Ovary (tissue), 10 donors: ENCODE measurements at regions of chr10 and their contacts with region 1.

Region 1: DNA sequence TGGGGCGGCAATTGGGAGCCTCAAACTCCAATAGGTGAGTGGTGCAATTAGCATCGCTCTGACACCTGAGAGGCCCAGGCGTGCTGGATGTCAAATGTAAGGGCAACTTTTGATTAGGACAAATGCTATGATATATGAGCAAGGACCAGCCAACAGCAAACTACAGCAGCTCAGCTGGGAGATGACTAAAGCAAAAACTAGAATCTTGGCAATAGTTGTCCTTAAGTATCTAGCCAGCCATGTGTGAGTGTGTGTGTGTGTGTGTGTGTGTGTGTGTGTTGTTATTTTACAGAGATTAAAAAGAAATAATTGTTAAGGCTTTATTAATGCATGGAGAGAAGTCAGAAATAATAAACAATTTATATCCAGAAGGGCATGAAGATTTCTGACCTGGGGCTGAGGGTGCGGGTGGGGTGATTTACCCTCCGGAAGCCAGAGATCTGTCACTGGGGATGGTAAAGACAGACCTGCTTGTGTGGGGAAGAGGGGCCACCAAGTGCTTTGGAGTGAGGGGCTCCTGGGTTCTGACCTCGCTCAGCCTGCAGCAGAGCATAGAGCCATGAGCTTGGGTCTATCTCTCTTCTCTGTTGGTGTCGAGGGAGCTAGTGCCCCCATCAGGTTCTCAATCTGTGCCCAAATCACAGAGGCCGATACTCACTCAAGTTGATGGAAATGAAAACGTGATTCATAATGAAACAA is 77.3 kb downstream of the EMX2 start:
- DNase-seq: no peak
- H3K4me3 ChIP-seq: no peak overlapping the region
- H3K27ac ChIP-seq: no peak overlapping the region
- H3K4me1 ChIP-seq: no peaks in the 10 kb centered on the region
- H3K27me3 ChIP-seq: no peaks in the 10 kb centered on the region
- CTCF ChIP-seq: no peak
- EP300 ChIP-seq: no peak
- POLR2A ChIP-seq: no peak

Region 2: GRCh38 chr10:117653170-117653515 is 33.3 kb after region 1 on chr10:
- intact Hi-C with region 1: loop called in 1 of 4 experiments (anchors 2 kb)
- DNase-seq: no peak
- H3K4me3 ChIP-seq: no peak overlapping the region
- H3K27ac ChIP-seq: no peak overlapping the region
- H3K4me1 ChIP-seq: no peaks in the 10 kb centered on the region
- H3K27me3 ChIP-seq: no peaks in the 10 kb centered on the region
- CTCF ChIP-seq: no peak
- EP300 ChIP-seq: no peak
- POLR2A ChIP-seq: no peak

Region 3: GRCh38 chr10:117677890-117678500 is 58.1 kb after region 1 on chr10:
- intact Hi-C with region 1: no loop called
- DNase-seq: no peak
- H3K4me3 ChIP-seq: no peak overlapping the region
- H3K27ac ChIP-seq: no peak overlapping the region
- H3K4me1 ChIP-seq: no peaks in the 10 kb centered on the region
- H3K27me3 ChIP-seq: no peaks in the 10 kb centered on the region
- CTCF ChIP-seq: no peak
- EP300 ChIP-seq: no peak
- POLR2A ChIP-seq: no peak